ENCODE measurements at regions of chr7 and their contacts with region 1.

Region 1: GRCh38 chr7:30750010-30750409 is 1.9 kb upstream of the INMT start:
- DNase-seq: no peak
- H3K4me3 ChIP-seq: no peak overlapping the region
- H3K27ac ChIP-seq: no peak overlapping the region
- H3K4me1 ChIP-seq: no peaks in the 10 kb centered on the region
- H3K27me3 ChIP-seq: peaks cover 30% of the 10 kb centered on the region
- CTCF ChIP-seq: no peak

Region 2: DNA sequence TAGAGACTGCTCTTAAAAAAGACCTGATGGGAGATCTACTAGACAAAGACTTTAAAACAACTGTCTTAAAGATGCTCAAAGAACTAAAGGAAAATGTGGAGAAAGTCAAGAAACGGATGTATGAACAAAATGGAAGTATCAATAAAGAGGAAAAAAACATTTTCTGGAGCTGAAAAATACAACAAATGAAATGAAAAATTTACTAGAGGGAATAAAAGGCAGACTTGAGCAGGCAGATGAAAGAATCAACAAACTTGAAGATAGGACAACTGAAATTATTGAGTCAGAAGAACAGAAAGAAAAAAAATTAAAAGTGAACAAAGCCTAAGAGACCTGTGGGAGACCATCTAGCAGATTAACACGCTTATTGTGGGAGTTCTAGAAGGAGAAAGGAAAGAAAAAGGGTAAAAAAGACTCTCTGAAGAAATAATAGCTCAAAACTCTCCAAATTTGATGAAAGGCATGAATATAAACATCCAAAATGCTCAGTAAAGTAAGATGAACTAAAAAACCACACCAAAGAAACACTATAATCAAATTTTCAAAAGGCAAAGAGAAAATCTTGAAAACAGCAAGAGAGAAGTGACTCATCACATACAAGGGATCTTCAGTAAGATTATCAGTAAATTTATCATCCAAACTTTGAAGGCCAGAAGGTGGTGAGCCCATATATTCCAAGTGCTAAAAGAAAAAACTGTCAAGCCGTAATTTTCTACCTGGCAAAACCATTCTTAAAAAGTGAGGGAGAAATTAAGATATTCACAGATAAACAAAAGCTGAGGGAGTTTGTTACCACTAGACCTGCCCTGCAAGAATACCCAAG is 843.6 kb before region 1 on chr7:
- CTCF ChIA-PET with region 1: no interaction called
- POLR2A ChIA-PET with region 1: interaction called, 14 read pairs
- intact Hi-C with region 1: no loop called
- DNase-seq: no peak
- H3K4me3 ChIP-seq: no peak overlapping the region
- H3K27ac ChIP-seq: no peak overlapping the region
- H3K4me1 ChIP-seq: no peaks in the 10 kb centered on the region
- H3K27me3 ChIP-seq: no peaks in the 10 kb centered on the region
- CTCF ChIP-seq: no peak

Region 3: DNA sequence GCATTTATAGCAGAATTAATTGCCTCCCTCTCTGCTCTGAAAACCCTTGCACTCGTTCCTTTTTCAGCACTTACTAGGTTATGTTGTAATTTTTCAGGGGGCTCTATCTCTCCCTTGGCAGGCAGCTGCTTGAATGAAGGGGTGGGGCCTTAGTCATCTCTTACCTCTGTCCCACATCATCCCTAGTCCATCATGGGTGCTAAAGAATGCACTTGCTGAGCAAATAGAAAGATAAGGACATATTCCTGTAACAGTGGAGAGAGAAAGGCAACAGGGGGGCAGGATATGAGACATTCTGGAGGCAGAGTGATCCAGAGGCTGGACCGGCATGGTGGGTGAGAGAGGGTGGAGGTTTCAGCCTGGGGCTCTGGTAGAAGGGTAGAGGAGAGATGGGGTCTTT is 81.2 kb after region 1 on chr7:
- CTCF ChIA-PET with region 1: no interaction called
- POLR2A ChIA-PET with region 1: no interaction called
- intact Hi-C with region 1: no loop called
- DNase-seq: no peak
- H3K4me3 ChIP-seq: no peak overlapping the region
- H3K27ac ChIP-seq: no peak overlapping the region
- H3K4me1 ChIP-seq: peaks cover 10% of the 10 kb centered on the region
- H3K27me3 ChIP-seq: no peaks in the 10 kb centered on the region
- CTCF ChIP-seq: no peak

Measured in PC-9 (cell line).